MCF 10A (cell line): ENCODE measurements at regions of chr17 and their contacts with region 1.

Region 1: GRCh38 chr17:39164675-39165143 is 1.3 kb downstream of the ARL5C start:
- DNase-seq: peak; percentile 80
- H3K4me3 Mint-ChIP-seq: no peak overlapping the region
- H3K27ac Mint-ChIP-seq: no peak overlapping the region
- H3K4me1 Mint-ChIP-seq: peaks cover 18% of the 10 kb centered on the region
- H3K27me3 Mint-ChIP-seq: peaks cover 22% of the 10 kb centered on the region
- CTCF ChIP-seq: peak; percentile 68

Region 2: GRCh38 chr17:39174907-39175694 is 10.4 kb after region 1 on chr17:
- CTCF ChIA-PET with region 1: interaction called, 44 read pairs
- POLR2A ChIA-PET with region 1: interaction called, 3 read pairs
- intact Hi-C with region 1: no loop called
- DNase-seq: peak; percentile 73
- H3K4me3 Mint-ChIP-seq: no peak overlapping the region
- H3K27ac Mint-ChIP-seq: no peak overlapping the region
- H3K4me1 Mint-ChIP-seq: peaks cover 6% of the 10 kb centered on the region
- H3K27me3 Mint-ChIP-seq: no peaks in the 10 kb centered on the region
- CTCF ChIP-seq: peak; percentile 65

Region 3: GRCh38 chr17:39199820-39200069 is 35.0 kb after region 1 on chr17:
- CTCF ChIA-PET with region 1: interaction called, 3 read pairs
- POLR2A ChIA-PET with region 1: interaction called, 3 read pairs
- intact Hi-C with region 1: loop called (anchors 5 kb)
- DNase-seq: peak; percentile 95
- H3K4me3 Mint-ChIP-seq: peak overlapping the region; percentile 90
- H3K27ac Mint-ChIP-seq: peak overlapping the region; percentile 100
- H3K4me1 Mint-ChIP-seq: peaks cover 22% of the 10 kb centered on the region
- H3K27me3 Mint-ChIP-seq: no peaks in the 10 kb centered on the region
- CTCF ChIP-seq: no peak